Prostate gland (tissue), 2 donors: ENCODE measurements at regions of chr4 and their contacts with region 1.

Region 1: DNA sequence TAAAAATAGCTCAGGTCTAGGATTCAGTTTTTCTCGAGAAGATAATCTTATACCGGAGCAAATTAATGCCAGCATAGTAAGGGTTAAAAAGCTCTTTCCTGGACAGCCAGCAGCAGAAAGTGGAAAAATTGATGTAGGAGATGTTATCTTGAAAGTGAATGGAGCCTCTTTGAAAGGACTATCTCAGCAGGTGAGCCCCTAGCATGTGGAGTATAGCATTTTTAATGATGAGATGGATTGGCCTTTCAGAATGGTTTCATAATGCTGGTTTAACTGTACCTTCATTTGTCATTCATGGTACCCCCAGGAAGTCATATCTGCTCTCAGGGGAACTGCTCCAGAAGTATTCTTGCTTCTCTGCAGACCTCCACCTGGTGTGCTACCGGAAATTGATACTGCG is 79.4 kb downstream of the SLC10A6 start:
- DNase-seq: no peak
- H3K4me3 ChIP-seq: no peak overlapping the region
- H3K27ac ChIP-seq: no peak overlapping the region
- H3K4me1 ChIP-seq: no peaks in the 10 kb centered on the region
- H3K27me3 ChIP-seq: no peaks in the 10 kb centered on the region
- CTCF ChIP-seq: no peak
- POLR2A ChIP-seq: no peak

Region 2: GRCh38 chr4:86508436-86508835 is 261.4 kb before region 1 on chr4:
- intact Hi-C with region 1: loop called (anchors 10 kb)
- DNase-seq: no peak
- H3K4me3 ChIP-seq: no peak overlapping the region
- H3K27ac ChIP-seq: peak overlapping the region in 1 of 2 donors; percentile 46
- H3K4me1 ChIP-seq: no peaks in the 10 kb centered on the region
- H3K27me3 ChIP-seq: no peaks in the 10 kb centered on the region
- CTCF ChIP-seq: no peak
- POLR2A ChIP-seq: no peak

Region 3: DNA sequence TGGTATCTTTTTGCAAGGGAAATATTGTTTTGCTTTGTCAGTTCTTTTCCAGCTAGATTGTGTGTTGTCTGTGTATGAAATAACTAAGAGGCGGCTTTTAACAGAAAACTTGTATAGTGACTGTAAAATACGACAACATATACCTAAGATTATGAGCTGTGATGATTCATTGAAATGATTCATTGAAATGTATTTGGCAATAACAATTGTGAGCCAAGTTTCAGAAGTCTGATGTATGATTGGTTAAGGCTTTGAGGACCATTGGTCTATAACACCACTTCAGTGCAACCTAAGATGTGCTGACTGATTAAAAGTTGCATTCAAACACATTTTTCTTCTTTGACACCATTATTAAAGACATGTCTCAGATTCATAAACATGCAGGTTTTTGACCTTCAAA is 99.1 kb before region 1 on chr4:
- intact Hi-C with region 1: no loop called
- DNase-seq: no peak
- H3K4me3 ChIP-seq: no peak overlapping the region
- H3K27ac ChIP-seq: no peak overlapping the region
- H3K4me1 ChIP-seq: no peaks in the 10 kb centered on the region
- H3K27me3 ChIP-seq: no peaks in the 10 kb centered on the region
- CTCF ChIP-seq: no peak
- POLR2A ChIP-seq: no peak

Region 4: DNA sequence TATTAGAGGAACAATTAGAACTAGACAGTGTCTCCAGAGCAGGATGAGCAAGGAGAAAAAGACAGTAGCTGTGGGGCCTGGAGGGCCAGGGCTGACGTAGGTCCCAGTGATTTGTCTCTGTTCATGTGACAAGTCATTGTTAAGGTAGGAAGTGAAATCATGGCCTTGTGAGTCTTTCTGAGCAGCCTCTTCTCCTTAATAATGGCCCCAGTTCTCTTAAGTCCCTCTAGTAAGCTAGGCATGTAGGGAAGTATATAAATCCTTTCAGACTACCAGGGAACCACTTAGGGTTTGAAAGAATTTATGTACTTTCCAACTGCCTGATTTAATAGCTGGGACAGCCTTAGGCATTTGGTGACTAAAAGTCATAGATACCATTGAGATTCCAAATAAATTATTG is 317.6 kb after region 1 on chr4:
- intact Hi-C with region 1: no loop called
- DNase-seq: no peak
- H3K4me3 ChIP-seq: no peak overlapping the region
- H3K27ac ChIP-seq: no peak overlapping the region
- H3K4me1 ChIP-seq: peaks cover 21% of the 10 kb centered on the region
- H3K27me3 ChIP-seq: no peaks in the 10 kb centered on the region
- CTCF ChIP-seq: no peak
- POLR2A ChIP-seq: no peak